A549 (cell line): ENCODE measurements at regions of chr17 and their contacts with region 1.

Region 1: DNA sequence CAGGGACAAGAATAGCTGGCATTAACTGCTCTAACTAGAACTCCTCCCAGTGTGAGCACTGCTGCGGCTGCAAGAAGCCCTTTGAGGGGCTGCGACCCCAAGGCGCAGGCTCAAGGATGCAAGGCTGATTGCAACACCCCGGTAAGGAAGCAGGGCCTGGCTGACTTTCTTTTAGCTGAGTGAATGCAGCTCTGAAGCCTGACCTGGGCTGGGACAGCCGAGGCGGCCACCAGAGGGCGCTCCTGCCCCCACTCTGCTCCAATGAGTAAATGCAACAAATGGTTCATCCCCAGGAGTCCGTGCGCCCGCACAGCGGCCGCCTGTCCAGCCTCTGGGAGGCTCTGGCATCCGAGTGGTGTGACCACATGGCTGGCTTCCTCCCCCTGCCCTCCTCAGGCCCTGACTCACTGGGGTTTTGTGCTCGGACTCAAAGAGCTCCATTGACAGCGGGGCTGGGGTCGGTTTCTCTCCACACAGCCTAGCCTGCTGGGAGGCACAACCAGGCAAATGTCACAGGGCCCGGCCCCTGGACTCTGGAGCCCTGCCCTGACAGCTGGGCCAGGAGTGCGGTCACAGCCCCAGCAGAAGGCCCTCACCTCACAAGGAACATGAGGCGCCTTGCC is at the start of gene SMIM5:
- DNase-seq: peak; percentile 87 to 99
- ATAC-seq: peak; percentile 56 to 91
- H3K4me3 ChIP-seq: no peak within 1 kb of the TSS
- H3K27ac ChIP-seq: peak within 1 kb of the TSS; percentile 56 to 86
- H3K4me1 ChIP-seq: peaks cover 19% of the 10 kb centered on the region
- CTCF ChIP-seq: peak; percentile 98
- EP300 ChIP-seq: no peak
- POLR2A ChIP-seq: no peak
- RAD21 ChIP-seq: peak; percentile 83 to 85
- polyA plus RNA-seq, gene SMIM5: 0.25 and 0.30 TPM in 2 replicates

Region 2: DNA sequence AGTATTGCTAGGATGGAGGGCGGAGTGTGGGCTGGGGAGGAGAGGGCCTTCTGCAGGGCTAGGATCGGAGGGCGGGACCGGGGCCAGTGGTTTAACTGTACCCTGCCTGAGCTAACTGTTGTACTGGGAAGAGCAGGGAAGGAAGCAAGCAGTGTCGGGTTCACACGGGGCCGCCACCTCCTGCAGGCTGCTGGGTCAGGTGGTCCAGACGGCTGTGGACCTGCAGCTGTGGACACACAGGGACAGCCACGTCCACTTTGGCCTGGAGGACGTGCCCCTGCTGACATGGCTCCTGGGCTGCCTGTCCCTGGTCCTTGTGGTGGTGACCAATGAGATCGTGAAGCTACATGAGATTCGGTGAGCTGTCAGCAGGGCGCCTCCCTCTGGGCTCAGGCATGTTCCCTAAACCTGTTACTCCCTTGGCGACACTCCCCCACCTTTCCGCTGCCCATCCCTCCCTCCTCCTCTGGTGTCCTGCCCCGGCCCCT is 134.2 kb before region 1 on chr17:
- CTCF ChIA-PET with region 1: interaction called, 23 read pairs
- POLR2A ChIA-PET with region 1: no interaction called
- DNase-seq: peak in 1 of 2 experiments; percentile 44
- ATAC-seq: peak; percentile 11 to 26; a peak in 2 of 6 replicates
- H3K4me3 ChIP-seq: no peak overlapping the region
- H3K27ac ChIP-seq: no peak overlapping the region
- H3K4me1 ChIP-seq: no peaks in the 10 kb centered on the region
- CTCF ChIP-seq: no peak; the same call in 2 of the 3 replicates
- EP300 ChIP-seq: no peak
- POLR2A ChIP-seq: no peak
- RAD21 ChIP-seq: no peak

Region 3: DNA sequence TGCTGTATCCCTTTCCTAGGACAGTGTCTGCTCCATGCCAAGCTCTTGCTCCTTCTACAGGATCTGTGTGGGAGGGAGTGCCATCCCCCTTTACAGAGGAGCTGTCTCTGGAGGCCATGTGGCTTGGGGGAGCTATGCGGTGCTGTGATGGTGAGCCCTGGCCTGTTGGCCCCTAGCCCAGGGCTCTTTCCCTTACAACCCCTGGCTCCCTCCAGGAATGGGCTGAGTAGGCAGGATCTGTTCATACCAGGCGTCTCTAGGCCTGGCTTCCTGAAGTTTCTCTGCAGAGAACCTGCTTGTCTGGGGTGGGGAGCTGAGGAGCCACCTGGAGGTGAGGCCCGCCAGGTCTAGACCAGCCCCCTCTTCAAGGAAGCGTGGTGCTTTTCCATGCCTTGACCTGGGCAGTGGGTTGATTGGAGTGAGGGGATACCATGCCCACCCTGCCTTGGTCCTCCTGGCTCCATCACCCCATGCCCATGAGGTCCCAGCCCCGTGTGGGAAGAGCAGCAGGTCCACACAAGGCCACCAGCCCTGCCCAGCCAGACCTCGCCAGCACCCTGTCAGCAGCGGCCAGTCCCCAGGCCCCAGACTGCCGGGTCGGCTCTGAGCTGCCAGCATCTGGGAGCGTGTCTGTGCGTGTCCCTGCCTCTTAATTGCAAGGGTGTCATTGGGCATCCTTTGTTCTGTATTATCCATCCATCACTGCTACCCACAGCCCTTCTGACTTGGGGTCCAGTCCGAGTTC is 92.8 kb before region 1 on chr17:
- CTCF ChIA-PET with region 1: interaction called, 14 read pairs
- POLR2A ChIA-PET with region 1: no interaction called
- DNase-seq: no peak
- ATAC-seq: peak; percentile 16 to 22; a peak in 4 of 6 replicates
- H3K4me3 ChIP-seq: no peak overlapping the region
- H3K27ac ChIP-seq: peak overlapping the region in 1 of 2 experiments; percentile 68; a peak in 3 of 6 replicates
- H3K4me1 ChIP-seq: peaks cover 18% of the 10 kb centered on the region
- CTCF ChIP-seq: no peak
- EP300 ChIP-seq: no peak
- POLR2A ChIP-seq: no peak
- RAD21 ChIP-seq: no peak

Region 4: DNA sequence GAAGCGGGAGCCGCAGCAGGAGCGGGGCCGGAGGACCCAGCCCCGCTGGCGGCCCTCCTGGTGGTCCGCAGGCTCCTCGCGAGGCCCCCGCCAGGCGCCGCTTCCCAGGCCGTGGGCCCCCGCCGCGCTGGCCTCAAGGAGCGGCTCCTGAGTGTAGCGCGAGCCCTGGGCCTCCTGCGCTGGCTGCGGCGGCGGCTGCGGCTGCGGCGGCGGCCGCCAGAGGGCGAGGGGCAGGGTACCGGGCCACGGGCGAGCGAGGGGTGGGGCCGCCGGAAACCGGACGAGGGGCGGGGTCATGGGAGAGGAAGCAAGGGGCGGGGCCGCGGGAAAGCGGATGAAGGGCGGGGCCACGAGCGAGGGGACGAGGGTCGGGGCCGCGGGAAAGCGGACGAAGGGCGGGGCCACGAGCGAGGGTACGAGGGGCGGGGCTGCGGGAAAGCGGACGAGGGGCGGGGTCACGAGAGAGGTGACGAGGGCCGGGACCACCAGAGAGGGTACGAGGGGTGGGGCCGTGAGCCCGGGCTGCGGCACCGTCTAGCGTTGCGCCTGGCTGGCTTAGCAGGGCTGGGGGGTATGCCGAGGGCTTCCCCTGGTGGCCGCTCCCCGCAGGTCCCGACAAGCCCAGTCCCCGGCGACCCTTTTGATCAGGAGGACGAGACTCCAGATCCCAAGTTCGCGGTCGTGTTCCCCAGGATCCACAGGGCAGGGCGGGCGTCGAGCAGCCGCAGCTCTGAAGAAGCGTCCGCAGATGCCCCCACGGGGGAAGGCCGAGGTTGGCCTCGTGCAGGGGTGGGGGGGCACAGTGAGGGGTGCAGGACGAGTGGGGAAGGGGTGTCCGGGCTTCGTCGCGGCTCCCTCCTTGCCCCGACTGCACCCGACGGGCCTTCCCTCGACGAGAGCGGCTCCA is 43.7 kb before region 1 on chr17:
- CTCF ChIA-PET with region 1: interaction called, 926 read pairs
- POLR2A ChIA-PET with region 1: interaction called, 4 read pairs
- DNase-seq: peak; percentile 91 to 96
- ATAC-seq: peak; percentile 80 to 90
- H3K4me3 ChIP-seq: peak overlapping the region; percentile 57
- H3K27ac ChIP-seq: peak overlapping the region; percentile 90
- H3K4me1 ChIP-seq: peaks cover 21% of the 10 kb centered on the region
- CTCF ChIP-seq: peak; percentile 87
- EP300 ChIP-seq: no peak
- POLR2A ChIP-seq: peak; percentile 23
- RAD21 ChIP-seq: peak; percentile 50 to 83

Region 5: DNA sequence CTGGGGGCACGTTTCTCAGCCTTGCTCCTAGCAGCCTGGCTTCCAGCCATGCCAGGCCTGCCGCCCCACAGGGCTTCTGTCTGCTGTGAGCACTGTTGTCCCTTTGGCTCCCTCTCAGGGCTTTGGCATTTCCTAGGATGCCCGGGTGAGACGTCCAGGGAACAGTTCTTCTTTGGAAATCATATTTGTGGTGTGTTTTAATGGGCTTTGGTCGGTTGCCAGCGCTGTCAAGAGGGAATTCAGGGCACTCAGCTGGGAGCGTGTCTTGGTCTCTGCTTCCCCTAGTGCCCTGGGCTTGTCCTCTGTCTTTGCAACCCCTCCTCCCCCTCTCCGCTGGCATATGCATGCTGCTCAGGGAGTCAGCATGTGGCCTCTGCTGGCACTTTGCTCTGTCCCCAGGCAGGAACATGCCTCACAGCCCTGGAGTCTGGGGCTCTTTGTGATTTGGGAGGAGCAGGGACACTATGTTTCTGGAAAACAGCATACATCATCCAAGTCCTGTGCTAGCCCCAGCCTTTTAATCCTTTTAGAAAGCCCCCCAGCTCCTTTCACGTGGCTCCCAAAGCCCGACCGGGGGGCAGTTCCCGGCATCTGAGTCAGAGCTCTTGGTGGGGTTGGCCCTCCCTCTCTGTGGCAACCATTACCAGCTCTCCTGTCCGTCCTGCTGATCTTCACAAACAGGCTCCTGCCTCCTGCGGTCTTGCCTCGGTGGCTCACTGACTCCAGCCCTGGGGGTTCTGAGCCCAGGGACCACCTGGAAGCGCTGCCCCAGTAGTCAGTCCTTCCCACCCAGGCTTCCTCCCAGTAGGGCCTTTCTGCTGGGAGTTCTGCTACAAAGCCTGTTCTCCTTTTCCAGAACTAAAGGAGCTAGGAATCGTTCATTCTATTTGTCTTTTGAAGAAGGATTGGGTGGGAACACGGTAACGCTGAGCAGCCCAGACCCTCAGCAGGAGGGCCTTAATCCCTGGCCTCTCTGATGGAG is 60.8 kb after region 1 on chr17:
- CTCF ChIA-PET with region 1: interaction called, 148 read pairs
- POLR2A ChIA-PET with region 1: no interaction called
- DNase-seq: peak; percentile 65 to 85
- ATAC-seq: peak; percentile 70 to 75
- H3K4me3 ChIP-seq: no peak overlapping the region; the same call in 2 of the 3 replicates
- H3K27ac ChIP-seq: peak overlapping the region; percentile 93
- H3K4me1 ChIP-seq: peaks cover 100% of the 10 kb centered on the region
- CTCF ChIP-seq: no peak; the same call in 2 of the 3 replicates
- EP300 ChIP-seq: peak in 1 of 2 experiments; percentile 40; a peak in 2 of 5 replicates
- POLR2A ChIP-seq: no peak
- RAD21 ChIP-seq: peak; percentile 36 to 54; a peak in 3 of 5 replicates